ENCODE measurements at regions of chr1 and their contacts with region 1.

Region 1: GRCh38 chr1:22131875-22132486 is 10.9 kb downstream of the WNT4 start:
- DNase-seq: peak; percentile 43 to 91
- H3K4me3 ChIP-seq: no peak overlapping the region
- H3K27ac ChIP-seq: no peak overlapping the region
- H3K4me1 ChIP-seq: peaks cover 4 to 25% (median 17%) of the 10 kb centered on the region in 4 experiments
- H3K27me3 ChIP-seq: 0 out of 7 replicates have a peak, but pooled peaks cover 0 to 2% (median 0%) of the 10 kb centered on the region in 4 experiments
- CTCF ChIP-seq: peak in 2 of 3 experiments; percentile 96 to 97; a peak in 3 of 4 replicates
- EP300 ChIP-seq: 0 out of 3 replicates have a peak, but pooled peaks of 1 of the 2 experiments have one; percentile 14
- POLR2A ChIP-seq: no peak
- RAD21 ChIP-seq: peak; percentile 98 to 100

Region 2: GRCh38 chr1:22114083-22115012 is 17.6 kb before region 1 on chr1:
- CTCF ChIA-PET with region 1: interaction called, 46 read pairs
- POLR2A ChIA-PET with region 1: interaction called, 4 read pairs
- DNase-seq: peak in 1 of 2 experiments; percentile 54
- H3K4me3 ChIP-seq: no peak overlapping the region
- H3K27ac ChIP-seq: 0 out of 2 replicates have a peak overlapping the region, but pooled peaks have one; percentile 26
- H3K4me1 ChIP-seq: peaks cover 0 to 13% (median 0%) of the 10 kb centered on the region in 4 experiments; a peak in 3 of 7 replicates
- H3K27me3 ChIP-seq: no peaks in the 10 kb centered on the region
- CTCF ChIP-seq: no peak
- EP300 ChIP-seq: no peak
- POLR2A ChIP-seq: no peak
- RAD21 ChIP-seq: no peak

Region 3: DNA sequence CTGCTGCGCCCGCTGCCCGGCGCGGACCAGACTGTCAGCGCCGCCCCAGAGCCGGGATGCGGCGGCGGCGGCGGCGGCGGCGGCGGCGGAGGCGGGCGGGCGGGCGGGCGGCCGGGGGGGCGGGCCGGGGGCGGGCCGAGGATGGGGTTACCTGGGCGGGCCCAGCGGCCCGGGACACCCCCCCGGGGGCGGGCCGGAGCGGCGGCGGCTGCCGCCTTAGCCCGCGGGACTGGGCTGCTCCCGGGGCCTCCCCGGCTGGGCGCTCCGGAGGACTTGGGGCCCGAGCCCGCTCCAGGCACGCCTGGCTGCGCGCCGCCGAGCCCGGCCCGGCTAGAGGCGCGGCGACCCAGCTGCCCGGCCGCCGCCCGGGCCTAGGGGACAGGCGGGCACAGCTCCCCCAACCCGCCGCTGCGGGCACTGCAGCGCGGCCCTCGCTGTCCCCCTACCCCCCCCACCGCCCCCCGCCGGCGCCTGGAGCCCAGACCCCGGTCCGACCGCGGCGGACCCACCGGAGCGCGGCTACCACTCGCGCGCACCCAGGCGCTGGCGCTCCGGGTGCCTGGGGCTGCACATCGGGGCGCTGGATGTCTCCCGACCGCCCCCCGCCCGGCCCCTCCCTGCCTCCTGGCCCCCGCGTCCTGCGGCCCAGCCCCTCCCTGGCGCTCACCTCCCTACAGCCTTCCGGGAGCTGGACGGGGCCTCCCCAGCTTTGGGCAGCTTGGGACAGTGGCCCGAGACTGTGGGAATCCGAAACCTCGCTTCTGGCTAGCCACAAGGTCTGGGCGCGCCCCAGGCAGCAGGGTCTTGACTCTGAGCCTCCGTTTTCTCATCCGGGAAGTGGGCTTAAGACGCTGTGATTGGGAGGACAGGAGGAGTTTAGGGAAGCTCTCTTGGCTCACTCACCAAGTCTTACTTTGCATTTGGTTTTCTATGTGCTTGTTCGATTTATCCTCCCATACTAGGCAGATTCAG is 11.4 kb after region 1 on chr1 and contains the start of gene WNT4:
- CTCF ChIA-PET with region 1: interaction called, 39 read pairs
- POLR2A ChIA-PET with region 1: interaction called, 5 read pairs
- DNase-seq: peak in 1 of 2 experiments; percentile 74
- H3K4me3 ChIP-seq: peak within 1 kb of the TSS; percentile 46 to 73 (median 52)
- H3K27ac ChIP-seq: no peak within 1 kb of the TSS
- H3K4me1 ChIP-seq: peaks cover 5 to 23% (median 10%) of the 10 kb centered on the region in 4 experiments
- H3K27me3 ChIP-seq: peaks cover 4 to 40% (median 26%) of the 10 kb centered on the region in 4 experiments
- CTCF ChIP-seq: peak in 2 of 3 experiments; percentile 19 to 50; a peak in 3 of 4 replicates
- EP300 ChIP-seq: no peak
- POLR2A ChIP-seq: no peak
- RAD21 ChIP-seq: peak in 1 of 2 experiments; percentile 46; a peak in 2 of 4 replicates
- total RNA-seq, gene WNT4: 1.3 and 1.4 TPM in 2 replicates

Region 4: DNA sequence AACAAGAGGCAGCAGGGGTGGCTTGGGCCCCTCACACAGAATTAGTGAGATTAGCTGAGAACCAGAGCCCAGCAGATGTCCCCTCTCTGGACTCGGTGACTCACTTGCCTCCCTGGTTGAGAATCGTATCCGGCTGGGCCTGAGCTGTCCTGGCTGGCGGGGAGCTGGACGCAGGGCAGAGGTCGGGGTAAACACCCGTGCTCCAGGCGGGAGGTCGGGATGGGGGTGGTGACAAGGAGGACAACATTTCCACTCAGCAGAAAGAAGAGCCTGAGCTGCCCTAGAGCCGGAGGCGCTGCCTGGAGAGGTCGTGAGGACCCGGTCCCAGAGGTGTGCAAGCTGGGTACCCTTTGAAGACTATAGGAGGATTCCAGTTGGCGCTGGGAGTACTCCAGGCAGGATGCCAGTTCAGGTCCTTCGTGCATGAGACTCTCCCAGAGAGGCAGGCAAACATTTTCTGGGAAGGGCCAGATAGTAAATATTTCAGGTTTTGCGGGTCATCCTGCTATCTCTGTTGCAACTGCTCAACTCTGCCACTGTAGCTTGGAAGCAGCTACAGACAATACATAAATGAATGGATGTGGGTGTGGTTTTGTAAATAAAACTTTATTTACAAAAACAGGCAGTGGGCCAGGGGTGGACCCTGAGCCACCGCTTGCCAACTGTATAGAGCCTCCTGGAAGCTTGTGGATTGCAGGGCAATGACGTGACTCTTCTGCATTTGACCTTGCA is 127.7 kb after region 1 on chr1:
- CTCF ChIA-PET with region 1: interaction called, 12 read pairs
- POLR2A ChIA-PET with region 1: no interaction called
- DNase-seq: no peak
- H3K4me3 ChIP-seq: no peak overlapping the region
- H3K27ac ChIP-seq: no peak overlapping the region
- H3K4me1 ChIP-seq: peaks cover 10 to 27% (median 17%) of the 10 kb centered on the region in 4 experiments
- H3K27me3 ChIP-seq: no peaks in the 10 kb centered on the region
- CTCF ChIP-seq: no peak
- EP300 ChIP-seq: no peak
- POLR2A ChIP-seq: no peak
- RAD21 ChIP-seq: no peak

Measured in H1 (cell line).